Endothelial cell of umbilical vein (primary cell): ENCODE measurements at regions of chr7 and their contacts with region 1.

Region 1: GRCh38 chr7:22103255-22103969 is 157.7 kb upstream of the CDCA7L start:
- DNase-seq: peak; percentile 73
- H3K4me3 ChIP-seq: no peak overlapping the region
- H3K27ac ChIP-seq: no peak overlapping the region
- H3K4me1 ChIP-seq: no peaks in the 10 kb centered on the region
- H3K27me3 ChIP-seq: peaks cover 17 to 21% of the 10 kb centered on the region in 2 experiments
- CTCF ChIP-seq: peak; percentile 72 to 78
- POLR2A ChIP-seq: no peak

Region 2: DNA sequence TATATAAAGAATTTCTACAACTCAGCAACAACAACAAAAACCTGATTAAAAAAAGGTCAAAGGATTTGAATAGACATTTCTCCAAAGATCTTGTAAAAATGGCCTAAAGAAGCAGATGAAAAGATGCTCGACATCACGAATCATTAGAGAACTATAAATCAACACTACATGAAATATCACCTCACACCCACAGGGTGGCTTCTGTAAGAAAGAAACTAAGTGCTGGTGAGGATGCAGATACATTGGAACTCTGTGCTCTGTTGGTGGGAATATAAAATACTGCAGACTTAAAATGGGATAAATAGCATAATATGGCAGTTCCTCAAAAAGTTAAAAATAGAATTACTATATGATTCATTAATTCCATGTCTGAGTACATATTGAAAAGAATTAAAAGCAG is 119.4 kb before region 1 on chr7:
- CTCF ChIA-PET with region 1: no interaction called
- POLR2A ChIA-PET with region 1: no interaction called
- dilution Hi-C with region 1: no loop called
- intact Hi-C with region 1: no loop called
- DNase-seq: no peak
- H3K4me3 ChIP-seq: no peak overlapping the region
- H3K27ac ChIP-seq: no peak overlapping the region
- H3K4me1 ChIP-seq: no peaks in the 10 kb centered on the region
- H3K27me3 ChIP-seq: no peaks in the 10 kb centered on the region
- CTCF ChIP-seq: no peak
- POLR2A ChIP-seq: no peak

Region 3: DNA sequence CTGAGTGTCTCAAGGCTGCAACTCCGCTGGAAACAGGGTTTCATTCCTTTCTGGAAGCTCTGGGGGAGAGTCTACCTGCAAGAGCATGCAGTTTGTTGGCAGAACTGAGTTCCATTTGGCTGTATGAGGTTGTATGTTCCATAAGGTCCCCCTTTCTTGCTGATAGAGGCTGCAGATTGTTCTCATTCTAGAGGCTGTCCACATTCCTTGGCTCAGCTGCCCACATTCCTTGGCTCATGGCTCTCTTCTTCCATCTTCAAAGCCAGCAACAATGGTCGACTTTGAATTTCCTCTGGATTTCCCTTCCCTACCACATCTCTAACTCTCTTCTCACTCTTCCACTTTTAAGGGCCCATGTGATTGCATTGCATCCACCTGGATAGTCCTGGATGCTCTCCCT is 10.4 kb before region 1 on chr7:
- CTCF ChIA-PET with region 1: interaction called, 10 read pairs
- POLR2A ChIA-PET with region 1: no interaction called
- dilution Hi-C with region 1: no loop called
- intact Hi-C with region 1: no loop called
- DNase-seq: peak; percentile 20
- H3K4me3 ChIP-seq: no peak overlapping the region
- H3K27ac ChIP-seq: no peak overlapping the region
- H3K4me1 ChIP-seq: peaks cover 9% of the 10 kb centered on the region
- H3K27me3 ChIP-seq: peaks cover 10 to 13% of the 10 kb centered on the region in 2 experiments
- CTCF ChIP-seq: no peak
- POLR2A ChIP-seq: no peak

Region 4: GRCh38 chr7:22121702-22122474 is 18.5 kb after region 1 on chr7:
- CTCF ChIA-PET with region 1: no interaction called
- POLR2A ChIA-PET with region 1: no interaction called
- dilution Hi-C with region 1: no loop called
- intact Hi-C with region 1: no loop called
- DNase-seq: peak; percentile 96
- H3K4me3 ChIP-seq: no peak overlapping the region
- H3K27ac ChIP-seq: peak overlapping the region; percentile 87
- H3K4me1 ChIP-seq: peaks cover 50% of the 10 kb centered on the region
- H3K27me3 ChIP-seq: no peaks in the 10 kb centered on the region
- CTCF ChIP-seq: no peak
- POLR2A ChIP-seq: peak; percentile 29

Region 5: DNA sequence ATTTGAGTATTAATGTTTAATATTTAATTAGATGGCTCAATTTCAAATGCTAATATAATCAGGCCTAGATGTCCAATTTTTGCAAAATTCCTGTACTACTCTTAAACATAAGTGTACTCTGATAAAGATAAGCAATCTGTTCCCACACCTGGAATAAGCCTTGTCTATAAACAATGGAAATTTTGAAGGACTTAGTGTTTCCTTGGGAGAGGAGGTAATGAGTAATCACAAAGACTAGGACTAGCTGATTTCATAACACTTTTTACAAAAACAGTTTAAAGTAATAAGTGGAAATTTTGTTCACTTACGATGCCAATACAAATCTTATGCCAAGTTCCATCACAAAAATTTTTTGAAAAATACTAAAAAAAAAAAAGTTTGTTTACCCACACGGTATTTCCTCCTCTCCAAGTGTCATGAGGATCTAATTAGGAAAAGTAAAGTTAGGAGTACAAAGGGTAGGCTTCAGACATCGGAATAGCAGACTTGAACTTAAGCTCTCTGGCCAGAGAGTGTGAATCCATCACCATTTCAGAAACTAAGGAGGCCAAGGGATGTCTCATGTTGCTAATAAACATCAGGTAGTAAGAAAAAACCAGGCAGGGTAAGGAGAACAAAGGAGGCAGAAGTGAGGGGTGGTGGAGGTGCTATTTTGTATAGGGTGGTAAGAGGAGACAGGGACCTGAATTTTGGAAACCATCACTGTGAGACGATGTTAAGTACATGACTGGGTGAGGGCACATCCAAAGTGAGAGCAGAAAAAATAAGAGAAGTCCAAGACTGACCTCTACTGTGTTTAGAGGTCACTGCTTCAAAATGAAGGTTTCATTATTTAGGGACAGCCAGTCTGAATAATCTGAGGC is 192.2 kb after region 1 on chr7:
- CTCF ChIA-PET with region 1: interaction called, 88 read pairs
- POLR2A ChIA-PET with region 1: no interaction called
- dilution Hi-C with region 1: no loop called
- intact Hi-C with region 1: loop called (anchors 2 kb)
- DNase-seq: peak; percentile 80
- H3K4me3 ChIP-seq: no peak overlapping the region
- H3K27ac ChIP-seq: peak overlapping the region; percentile 10
- H3K4me1 ChIP-seq: peaks cover 5% of the 10 kb centered on the region
- H3K27me3 ChIP-seq: no peaks in the 10 kb centered on the region
- CTCF ChIP-seq: peak in 1 of 2 donors; percentile 13
- POLR2A ChIP-seq: no peak

Region 6: GRCh38 chr7:22452142-22452959 is 348.9 kb after region 1 on chr7:
- CTCF ChIA-PET with region 1: no interaction called
- POLR2A ChIA-PET with region 1: no interaction called
- dilution Hi-C with region 1: loop called (anchors 25 kb)
- intact Hi-C with region 1: no loop called
- DNase-seq: peak; percentile 51
- H3K4me3 ChIP-seq: no peak overlapping the region
- H3K27ac ChIP-seq: no peak overlapping the region
- H3K4me1 ChIP-seq: no peaks in the 10 kb centered on the region
- H3K27me3 ChIP-seq: no peaks in the 10 kb centered on the region
- CTCF ChIP-seq: peak; percentile 70 to 74
- POLR2A ChIP-seq: no peak

Region 7: DNA sequence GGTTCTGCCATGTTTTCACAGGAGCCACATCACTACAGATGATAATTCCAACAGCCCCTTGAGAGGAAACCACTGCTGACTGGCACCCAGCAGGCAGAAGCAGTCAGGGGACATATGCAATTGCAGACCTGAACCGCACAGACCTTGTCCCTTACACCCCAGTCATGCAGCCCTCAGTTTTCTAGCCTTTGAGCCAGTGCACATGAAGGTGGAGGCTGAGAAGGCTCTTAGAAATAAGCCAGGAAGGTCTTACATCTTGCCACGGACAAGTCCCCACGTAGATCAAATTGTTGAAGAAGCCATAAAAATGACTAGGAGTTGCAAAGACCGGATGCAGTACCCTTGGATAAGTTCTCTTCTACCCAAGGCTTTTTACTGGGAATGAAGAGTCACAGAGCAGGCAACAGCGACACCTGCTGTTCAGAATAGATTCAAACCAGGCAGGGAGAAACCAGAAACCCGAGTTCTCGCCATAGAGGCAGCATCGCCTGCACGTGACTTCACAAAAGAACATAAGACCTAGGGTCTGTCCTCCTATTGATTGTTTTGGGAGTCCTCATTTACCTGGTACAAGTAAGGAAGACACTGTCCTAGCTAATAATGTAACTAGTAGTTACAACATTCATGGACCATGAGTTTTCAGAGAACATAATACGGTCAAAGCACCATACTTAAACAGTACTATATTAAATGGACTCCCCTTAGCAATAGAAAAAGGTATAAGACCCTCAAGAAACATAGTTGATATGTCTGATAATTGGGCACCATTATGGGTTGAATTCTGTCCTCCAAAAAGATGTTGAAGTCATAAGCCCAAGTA is 385.4 kb after region 1 on chr7:
- CTCF ChIA-PET with region 1: interaction called, 81 read pairs
- POLR2A ChIA-PET with region 1: no interaction called
- dilution Hi-C with region 1: no loop called
- intact Hi-C with region 1: loop called (anchors 1 kb)
- DNase-seq: peak; percentile 86
- H3K4me3 ChIP-seq: no peak overlapping the region
- H3K27ac ChIP-seq: peak overlapping the region; percentile 44
- H3K4me1 ChIP-seq: peaks cover 42% of the 10 kb centered on the region
- H3K27me3 ChIP-seq: no peaks in the 10 kb centered on the region
- CTCF ChIP-seq: peak; percentile 74 to 90
- POLR2A ChIP-seq: no peak

Region 8: DNA sequence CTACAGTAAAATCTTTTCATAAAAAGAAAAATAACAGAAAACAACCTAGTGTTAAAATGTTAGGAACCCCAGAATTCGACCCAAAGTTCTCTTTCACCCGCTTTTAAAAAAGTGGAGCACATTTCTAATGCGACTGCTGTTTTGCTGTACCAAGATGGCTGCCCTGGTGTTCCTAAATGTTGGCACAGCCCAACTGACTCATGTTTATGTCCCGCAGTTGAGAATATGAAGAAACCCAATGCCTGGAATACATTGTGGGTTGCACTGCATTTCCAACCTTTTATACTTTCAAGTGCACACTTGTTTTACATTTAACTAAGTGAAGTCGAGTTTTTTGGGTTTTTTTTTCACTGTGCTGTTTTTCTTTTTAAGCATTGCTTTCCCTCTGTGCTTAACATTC is 395.6 kb after region 1 on chr7:
- CTCF ChIA-PET with region 1: interaction called, 15 read pairs
- POLR2A ChIA-PET with region 1: no interaction called
- dilution Hi-C with region 1: no loop called
- intact Hi-C with region 1: loop called (anchors 1 kb)
- DNase-seq: no peak
- H3K4me3 ChIP-seq: peak overlapping the region in 2 of 3 experiments; percentile 40 to 43
- H3K27ac ChIP-seq: peak overlapping the region; percentile 90
- H3K4me1 ChIP-seq: peaks cover 39% of the 10 kb centered on the region
- H3K27me3 ChIP-seq: no peaks in the 10 kb centered on the region
- CTCF ChIP-seq: no peak
- POLR2A ChIP-seq: peak; percentile 43